Activated naive CD4-positive, alpha-beta T cell treated with anti-CD3 and anti-CD28 coated beads for 36 hours (primary cell): ENCODE measurements at regions of chr5 and their contacts with region 1.

Region 1: GRCh38 chr5:39547553-39548154 is 122.9 kb upstream of the DAB2 start:
- DNase-seq: peak; percentile 20
- H3K4me3 Mint-ChIP-seq: no peak overlapping the region
- H3K27ac Mint-ChIP-seq: no peak overlapping the region
- H3K4me1 Mint-ChIP-seq: peaks cover 2% of the 10 kb centered on the region
- H3K27me3 Mint-ChIP-seq: no peaks in the 10 kb centered on the region

Region 2: GRCh38 chr5:38724301-38725030 is 823.2 kb before region 1 on chr5:
- CTCF ChIA-PET with region 1: no interaction called
- intact Hi-C with region 1: no loop called
- DNase-seq: no peak
- H3K4me3 Mint-ChIP-seq: no peak overlapping the region
- H3K27ac Mint-ChIP-seq: no peak overlapping the region
- H3K4me1 Mint-ChIP-seq: no peaks in the 10 kb centered on the region
- H3K27me3 Mint-ChIP-seq: peaks cover 10% of the 10 kb centered on the region

Region 3: GRCh38 chr5:38831909-38832308 is 715.7 kb before region 1 on chr5:
- CTCF ChIA-PET with region 1: no interaction called
- intact Hi-C with region 1: loop called (anchors 10 kb)
- DNase-seq: peak; percentile 21
- H3K4me3 Mint-ChIP-seq: no peak overlapping the region
- H3K27ac Mint-ChIP-seq: no peak overlapping the region
- H3K4me1 Mint-ChIP-seq: no peaks in the 10 kb centered on the region
- H3K27me3 Mint-ChIP-seq: peaks cover 15% of the 10 kb centered on the region

Region 4: DNA sequence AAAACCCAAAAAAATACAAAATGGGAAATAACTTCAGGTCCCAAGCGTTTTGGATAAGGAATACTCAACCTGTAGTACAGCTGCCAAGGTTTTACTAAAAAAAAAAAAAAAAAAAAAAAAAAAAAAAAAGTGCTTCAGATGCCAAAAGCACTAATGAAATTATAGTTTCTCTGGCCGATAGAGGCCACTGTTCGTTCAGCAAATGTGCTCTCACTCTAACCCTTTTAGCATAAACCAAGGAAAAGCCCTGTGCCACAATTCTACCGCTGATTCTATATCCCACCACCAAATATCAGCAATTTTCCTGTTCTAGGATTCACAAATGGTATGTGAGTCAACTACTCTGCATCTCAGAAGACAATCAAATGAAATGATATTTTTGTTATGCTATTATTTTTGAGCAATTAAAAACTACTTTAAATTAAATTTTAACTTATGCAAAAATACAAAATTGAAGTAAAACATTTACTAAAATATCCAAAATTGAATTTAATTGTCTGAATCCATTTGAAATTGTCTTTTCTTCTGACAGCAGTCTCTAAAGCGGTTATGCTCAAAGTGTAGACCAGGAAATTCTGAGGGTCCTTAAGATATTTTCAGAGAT is 553.2 kb before region 1 on chr5:
- CTCF ChIA-PET with region 1: no interaction called
- intact Hi-C with region 1: loop called (anchors 10 kb)
- DNase-seq: peak; percentile 55
- H3K4me3 Mint-ChIP-seq: no peak overlapping the region
- H3K27ac Mint-ChIP-seq: no peak overlapping the region
- H3K4me1 Mint-ChIP-seq: peaks cover 14% of the 10 kb centered on the region
- H3K27me3 Mint-ChIP-seq: no peaks in the 10 kb centered on the region

Region 5: DNA sequence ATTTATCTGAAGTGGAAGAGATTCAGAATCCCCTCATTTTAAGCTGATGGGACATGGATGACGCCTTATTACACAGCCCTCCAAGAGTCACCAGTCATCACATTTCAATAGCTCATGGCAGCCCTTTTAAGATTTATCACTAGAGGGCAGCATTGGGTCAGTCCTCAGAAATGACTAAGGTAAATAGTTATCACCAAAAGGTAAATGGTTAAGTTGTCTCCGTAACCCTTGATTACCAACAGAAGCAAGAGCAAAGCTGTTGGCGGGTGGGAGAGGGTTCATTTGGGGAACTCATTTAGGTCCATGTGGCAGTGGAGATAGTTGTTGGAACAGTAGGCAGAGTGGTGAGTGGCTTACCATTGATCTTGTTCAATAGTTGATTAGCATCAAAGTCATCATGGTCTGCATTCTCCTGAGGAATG is 171.3 kb before region 1 on chr5:
- CTCF ChIA-PET with region 1: interaction called, 49 read pairs
- intact Hi-C with region 1: loop called (anchors 1 kb)
- DNase-seq: peak; percentile 65
- H3K4me3 Mint-ChIP-seq: no peak overlapping the region
- H3K27ac Mint-ChIP-seq: no peak overlapping the region
- H3K4me1 Mint-ChIP-seq: no peaks in the 10 kb centered on the region
- H3K27me3 Mint-ChIP-seq: no peaks in the 10 kb centered on the region

Region 6: DNA sequence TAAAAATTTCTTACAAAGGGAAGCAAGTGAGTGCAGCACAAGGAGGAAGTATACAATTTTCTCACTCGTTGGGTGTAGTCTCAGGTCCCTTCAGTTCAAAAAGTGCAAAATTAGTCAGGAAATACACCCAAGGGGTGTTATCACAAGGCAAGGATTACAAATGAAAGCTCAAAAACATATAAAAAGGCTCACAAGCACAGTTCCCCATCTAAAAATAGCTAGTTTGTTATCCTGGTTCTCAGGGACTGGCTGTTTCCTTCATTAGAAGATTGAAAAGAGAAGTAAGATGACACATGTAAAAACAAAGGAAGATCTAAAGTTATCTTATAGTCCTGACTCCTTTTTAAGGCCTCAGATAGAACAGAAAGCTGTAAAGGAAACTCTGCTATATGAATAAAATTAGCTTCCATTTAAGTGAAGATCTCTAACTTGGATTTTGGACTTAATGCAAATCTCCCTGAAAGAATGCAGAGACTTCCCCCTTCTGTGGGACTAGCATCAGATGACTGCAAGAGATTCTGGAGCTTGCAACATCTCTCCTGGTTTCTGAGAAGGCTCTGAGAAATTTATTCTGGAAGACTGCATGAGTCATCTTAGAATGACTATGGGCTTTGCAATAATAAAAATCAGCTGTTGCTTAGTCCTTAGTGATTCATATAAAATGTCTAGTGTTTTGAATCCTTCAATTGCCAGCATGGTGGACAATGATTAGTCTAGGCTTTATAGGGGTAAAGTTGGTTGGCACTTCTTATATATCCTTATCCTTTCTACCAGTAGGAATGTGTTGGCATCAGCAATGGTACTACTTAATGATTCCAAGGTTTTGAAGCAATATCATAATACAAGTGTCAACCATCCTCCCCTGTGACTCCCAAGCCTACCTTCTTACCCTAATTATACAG is 148.3 kb before region 1 on chr5:
- CTCF ChIA-PET with region 1: interaction called, 12 read pairs
- intact Hi-C with region 1: no loop called
- DNase-seq: no peak
- H3K4me3 Mint-ChIP-seq: no peak overlapping the region
- H3K27ac Mint-ChIP-seq: peak overlapping the region; percentile 10
- H3K4me1 Mint-ChIP-seq: peaks cover 9% of the 10 kb centered on the region
- H3K27me3 Mint-ChIP-seq: no peaks in the 10 kb centered on the region

Region 7: GRCh38 chr5:39424736-39425637 is 122.7 kb before region 1 on chr5 and contains the start of gene DAB2:
- CTCF ChIA-PET with region 1: interaction called, 7 read pairs
- intact Hi-C with region 1: loop called (anchors 1 kb)
- DNase-seq: peak; percentile 60
- H3K4me3 Mint-ChIP-seq: peak within 1 kb of the TSS; percentile 74
- H3K27ac Mint-ChIP-seq: no peak within 1 kb of the TSS
- H3K4me1 Mint-ChIP-seq: no peaks in the 10 kb centered on the region
- H3K27me3 Mint-ChIP-seq: peaks cover 38% of the 10 kb centered on the region
- total RNA-seq, gene DAB2: not detected

Region 8: GRCh38 chr5:39570403-39571027 is 22.9 kb after region 1 on chr5:
- CTCF ChIA-PET with region 1: interaction called, 4 read pairs
- intact Hi-C with region 1: loop called (anchors 1 kb)
- DNase-seq: no peak
- H3K4me3 Mint-ChIP-seq: no peak overlapping the region
- H3K27ac Mint-ChIP-seq: no peak overlapping the region
- H3K4me1 Mint-ChIP-seq: no peaks in the 10 kb centered on the region
- H3K27me3 Mint-ChIP-seq: peaks cover 5% of the 10 kb centered on the region